ENCODE measurements at regions of chr2 and their contacts with region 1.

Region 1: GRCh38 chr2:15939854-15940660 is at the start of gene MYCN:
- DNase-seq: peak in 2 of 3 donors; percentile 43 to 63
- ATAC-seq: peak; percentile 36 to 60 (median 50)
- H3K4me3 ChIP-seq: peak within 1 kb of the TSS; percentile 43 to 52 (median 44)
- H3K27ac ChIP-seq: no peak within 1 kb of the TSS
- H3K4me1 ChIP-seq: peaks cover 0 to 31% (median 14%) of the 10 kb centered on the region in 4 donors
- H3K27me3 ChIP-seq: peaks cover 0 to 5% of the 10 kb centered on the region in 2 donors
- CTCF ChIP-seq: peak in 2 of 4 donors; percentile 70 to 77
- POLR2A ChIP-seq: no peak
- total RNA-seq, gene MYCN: 0.07 to 0.35 (median 0.23) TPM in 4 of 6 experiments, not detected in the others

Region 2: GRCh38 chr2:15636972-15637785 is 302.9 kb before region 1 on chr2:
- intact Hi-C with region 1: loop called in 1 of 2 experiments (anchors 5 kb)
- DNase-seq: peak in 1 of 3 donors; percentile 57
- ATAC-seq: peak; percentile 80 to 87 (median 85)
- H3K4me3 ChIP-seq: no peak overlapping the region
- H3K27ac ChIP-seq: no peak overlapping the region
- H3K4me1 ChIP-seq: peaks cover 0 to 25% (median 0%) of the 10 kb centered on the region in 4 donors
- H3K27me3 ChIP-seq: no peaks in the 10 kb centered on the region
- CTCF ChIP-seq: peak; percentile 81 to 89 (median 83)
- POLR2A ChIP-seq: no peak

Region 3: DNA sequence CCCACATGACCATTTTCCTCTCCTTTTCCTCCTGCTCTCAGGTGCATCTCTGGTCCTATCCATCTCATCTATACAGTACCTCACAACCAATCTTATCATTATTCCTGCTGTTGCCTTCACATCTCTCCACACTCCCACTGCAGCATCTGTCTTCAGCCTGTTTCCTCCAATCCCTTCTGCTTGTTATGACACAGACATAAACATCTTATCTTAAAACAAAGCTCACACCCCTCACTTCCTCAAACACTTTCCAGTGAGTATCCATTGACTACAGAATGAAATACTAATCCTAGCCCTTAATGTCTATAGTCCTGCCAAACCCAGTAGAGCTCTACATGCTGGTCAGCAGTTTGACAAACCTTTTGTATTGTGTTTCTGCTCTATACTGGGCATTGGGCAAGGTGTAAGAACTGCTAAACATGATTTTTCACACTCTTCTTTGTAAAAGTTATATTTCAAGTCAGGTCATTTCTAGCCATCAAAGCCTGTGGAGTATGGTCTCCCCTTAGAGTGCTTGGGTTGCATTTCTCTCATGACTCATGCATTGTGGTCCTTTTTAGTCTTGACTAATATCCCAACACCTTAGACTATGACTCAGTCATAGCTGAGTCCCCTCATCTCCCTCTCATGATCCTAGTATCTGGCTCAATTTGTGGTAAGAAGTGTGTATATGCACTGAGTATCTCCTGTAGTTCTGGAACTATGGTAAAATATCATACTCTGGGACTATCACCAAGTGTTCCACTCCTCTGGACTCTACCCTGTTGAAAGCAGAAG is 538.6 kb after region 1 on chr2:
- intact Hi-C with region 1: no loop called
- DNase-seq: no peak
- ATAC-seq: peak in 1 of 4 donors; percentile 28
- H3K4me3 ChIP-seq: no peak overlapping the region
- H3K27ac ChIP-seq: no peak overlapping the region
- H3K4me1 ChIP-seq: no peaks in the 10 kb centered on the region
- H3K27me3 ChIP-seq: no peaks in the 10 kb centered on the region
- CTCF ChIP-seq: no peak
- POLR2A ChIP-seq: no peak

Region 4: DNA sequence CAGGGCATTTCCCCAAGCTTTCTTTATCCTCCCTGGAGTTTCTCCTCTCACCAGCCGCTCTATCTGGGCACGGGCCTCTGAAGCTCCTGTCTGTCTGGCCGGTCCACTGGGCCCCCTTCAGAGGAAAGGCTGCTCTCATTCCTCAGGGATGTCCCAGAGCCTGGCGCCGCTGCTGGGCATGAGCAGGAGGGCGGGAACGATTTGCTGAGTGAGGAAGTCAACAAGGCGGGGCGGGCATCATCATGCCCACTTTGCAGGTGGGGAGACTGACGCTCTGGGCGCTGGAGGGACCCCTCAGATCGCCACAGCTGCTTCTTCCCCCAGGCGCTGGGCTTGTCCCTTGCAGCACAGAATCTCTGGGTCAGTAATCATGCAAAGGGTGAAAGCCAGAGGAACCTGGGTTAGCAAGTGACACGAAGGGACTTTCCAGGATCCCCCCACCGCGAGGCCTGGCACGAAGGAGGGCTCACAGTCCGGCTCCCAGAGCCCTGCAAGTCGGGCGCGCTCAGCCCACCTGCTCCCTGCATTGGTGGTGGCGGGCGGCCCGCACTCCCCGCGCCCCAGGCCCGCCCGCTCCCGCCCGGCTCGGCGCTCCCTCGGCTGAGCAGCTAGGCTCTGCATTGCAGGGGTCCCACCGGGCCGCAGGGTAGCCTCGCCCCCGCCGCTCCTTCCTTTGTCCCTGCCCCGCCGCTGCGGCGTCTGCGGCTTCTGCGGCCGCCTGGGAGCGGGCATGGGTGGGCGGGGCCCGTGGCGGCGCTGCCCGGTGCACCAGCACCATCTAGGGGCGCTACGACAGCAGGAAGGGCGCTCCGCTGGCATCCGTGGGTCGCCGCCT is 567.8 kb after region 1 on chr2:
- intact Hi-C with region 1: loop called (anchors 10 kb)
- DNase-seq: peak; percentile 64 to 68 (median 67)
- ATAC-seq: peak; percentile 79 to 86 (median 82)
- H3K4me3 ChIP-seq: peak overlapping the region; percentile 41 to 55 (median 47)
- H3K27ac ChIP-seq: no peak overlapping the region
- H3K4me1 ChIP-seq: peaks cover 0 to 31% (median 5%) of the 10 kb centered on the region in 4 donors
- H3K27me3 ChIP-seq: no peaks in the 10 kb centered on the region
- CTCF ChIP-seq: peak; percentile 77 to 92 (median 83)
- POLR2A ChIP-seq: no peak